Ovary (tissue), 10 donors: ENCODE measurements at regions of chr15 and their contacts with region 1.

Region 1: GRCh38 chr15:83559310-83559966 is 94.5 kb upstream of the ADAMTSL3 start:
- DNase-seq: peak in 3 of 5 donors; percentile 28 to 46 (median 32)
- H3K4me3 ChIP-seq: no peak overlapping the region
- H3K27ac ChIP-seq: no peak overlapping the region
- H3K4me1 ChIP-seq: no peaks in the 10 kb centered on the region
- H3K27me3 ChIP-seq: no peaks in the 10 kb centered on the region
- CTCF ChIP-seq: peak; percentile 41 to 49 (median 48)
- EP300 ChIP-seq: no peak
- POLR2A ChIP-seq: no peak

Region 2: GRCh38 chr15:83339396-83339795 is 220.0 kb before region 1 on chr15:
- intact Hi-C with region 1: no loop called
- DNase-seq: no peak
- H3K4me3 ChIP-seq: no peak overlapping the region
- H3K27ac ChIP-seq: no peak overlapping the region
- H3K4me1 ChIP-seq: no peaks in the 10 kb centered on the region
- H3K27me3 ChIP-seq: no peaks in the 10 kb centered on the region
- CTCF ChIP-seq: no peak
- EP300 ChIP-seq: no peak
- POLR2A ChIP-seq: no peak

Region 3: DNA sequence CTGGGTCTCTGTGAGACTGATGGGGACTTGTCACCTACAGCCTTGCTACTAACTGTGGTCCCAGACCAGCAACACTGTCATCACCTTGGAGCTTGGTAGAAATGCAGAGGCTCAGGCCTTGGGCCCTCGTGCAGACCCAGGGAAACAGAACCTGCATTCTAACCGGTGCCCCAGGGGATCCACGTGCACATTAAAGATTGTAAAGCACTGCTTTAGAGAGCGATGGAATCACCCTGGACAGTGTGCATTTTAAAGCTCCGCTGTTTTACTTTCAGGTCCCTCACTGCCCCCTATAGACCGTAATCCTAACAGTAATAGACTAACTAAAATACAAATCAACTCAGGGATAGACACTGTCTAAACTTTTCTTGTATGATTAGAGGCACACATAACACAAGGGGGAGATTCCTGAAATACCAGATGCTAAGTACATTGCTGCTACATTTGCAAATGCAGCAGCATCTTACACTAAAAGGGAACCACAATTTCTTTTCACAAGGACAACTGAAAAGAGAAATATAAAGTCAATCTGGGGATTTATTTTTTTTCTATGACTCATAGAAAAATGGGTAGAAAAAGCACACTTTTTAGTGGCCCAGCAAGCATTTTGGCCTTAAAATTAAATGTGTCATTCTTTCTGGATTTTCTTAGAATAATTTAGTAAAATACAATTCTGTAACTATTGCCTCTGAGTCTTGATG is 122.8 kb before region 1 on chr15:
- intact Hi-C with region 1: loop called in 3 of 4 experiments (anchors 2 to 10 kb)
- DNase-seq: no peak
- H3K4me3 ChIP-seq: no peak overlapping the region
- H3K27ac ChIP-seq: no peak overlapping the region
- H3K4me1 ChIP-seq: no peaks in the 10 kb centered on the region
- H3K27me3 ChIP-seq: no peaks in the 10 kb centered on the region
- CTCF ChIP-seq: no peak
- EP300 ChIP-seq: no peak
- POLR2A ChIP-seq: no peak

Region 4: DNA sequence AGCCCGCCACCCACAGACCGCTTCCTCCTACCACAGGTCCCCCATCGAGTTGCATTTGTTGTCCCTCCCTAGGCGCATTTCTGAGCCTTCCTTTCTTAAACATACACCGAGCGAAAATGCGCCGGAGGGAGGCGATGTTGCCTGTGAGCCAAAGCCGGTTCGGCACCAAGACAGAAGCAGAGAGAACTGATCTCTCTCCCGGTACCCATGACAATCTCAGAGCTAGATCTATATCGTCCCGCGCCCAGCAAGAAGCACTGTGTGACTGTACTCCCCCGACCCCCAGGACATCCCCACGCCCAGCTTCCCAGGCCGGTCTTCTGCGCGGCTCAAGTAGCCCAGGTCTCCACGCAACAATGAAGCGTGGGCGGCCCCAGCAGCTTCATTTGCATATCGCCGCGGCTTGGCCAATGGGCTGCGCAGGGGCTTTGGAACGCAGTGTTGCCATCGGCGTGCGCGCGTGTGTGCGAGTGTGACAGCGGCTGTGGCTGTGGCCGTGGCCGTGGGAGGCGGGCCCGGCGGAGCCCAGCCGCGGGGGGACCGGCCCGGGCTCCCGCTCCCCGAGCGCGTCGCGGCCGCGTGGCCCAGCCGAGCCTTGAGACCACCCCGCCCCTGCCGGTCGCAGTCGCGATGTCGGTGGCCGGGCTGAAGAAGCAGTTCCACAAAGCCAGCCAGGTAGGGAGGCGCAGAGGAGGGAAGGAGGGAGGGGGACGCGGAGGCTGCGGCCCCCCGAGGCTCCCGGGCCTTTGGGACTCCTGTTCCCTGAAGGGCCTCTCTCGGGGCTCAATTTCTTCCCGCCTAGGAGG is 112.3 kb before region 1 on chr15 and contains the start of gene SH3GL3:
- intact Hi-C with region 1: loop called in 2 of 4 experiments (anchors 10 kb)
- DNase-seq: peak; percentile 49 to 76 (median 68)
- H3K4me3 ChIP-seq: peak within 1 kb of the TSS; percentile 39
- H3K27ac ChIP-seq: no peak within 1 kb of the TSS
- H3K4me1 ChIP-seq: peaks cover 3% of the 10 kb centered on the region
- H3K27me3 ChIP-seq: no peaks in the 10 kb centered on the region
- CTCF ChIP-seq: no peak
- EP300 ChIP-seq: no peak
- POLR2A ChIP-seq: no peak
- total RNA-seq, gene SH3GL3: 0.25 to 1.7 (median 0.51) TPM in 6 of 7 donors, not detected in the other

Region 5: DNA sequence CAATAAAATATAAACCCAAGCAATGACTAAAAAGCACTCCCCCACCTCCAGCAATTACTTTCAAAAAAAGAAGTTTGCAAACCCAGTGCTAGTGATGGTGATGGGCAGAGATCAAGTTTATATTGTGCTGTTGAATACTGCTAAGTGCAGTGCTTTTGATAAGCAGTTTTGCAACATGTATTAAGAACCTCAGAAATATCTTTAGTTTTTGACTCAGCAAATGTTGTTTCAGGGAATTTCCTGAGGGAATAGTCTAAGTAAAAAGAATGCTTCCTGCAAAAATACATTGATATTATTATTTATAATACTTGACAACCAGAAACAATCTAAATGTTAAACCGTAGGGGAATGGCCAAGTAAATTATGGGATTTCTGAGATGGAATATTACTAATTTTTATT is 163.8 kb after region 1 on chr15:
- intact Hi-C with region 1: no loop called
- DNase-seq: no peak
- H3K4me3 ChIP-seq: no peak overlapping the region
- H3K27ac ChIP-seq: no peak overlapping the region
- H3K4me1 ChIP-seq: no peaks in the 10 kb centered on the region
- H3K27me3 ChIP-seq: no peaks in the 10 kb centered on the region
- CTCF ChIP-seq: no peak
- EP300 ChIP-seq: no peak
- POLR2A ChIP-seq: no peak